Left ventricle myocardium superior (tissue), 1 donor: ENCODE measurements at regions of chr12 and their contacts with region 1.

Region 1: DNA sequence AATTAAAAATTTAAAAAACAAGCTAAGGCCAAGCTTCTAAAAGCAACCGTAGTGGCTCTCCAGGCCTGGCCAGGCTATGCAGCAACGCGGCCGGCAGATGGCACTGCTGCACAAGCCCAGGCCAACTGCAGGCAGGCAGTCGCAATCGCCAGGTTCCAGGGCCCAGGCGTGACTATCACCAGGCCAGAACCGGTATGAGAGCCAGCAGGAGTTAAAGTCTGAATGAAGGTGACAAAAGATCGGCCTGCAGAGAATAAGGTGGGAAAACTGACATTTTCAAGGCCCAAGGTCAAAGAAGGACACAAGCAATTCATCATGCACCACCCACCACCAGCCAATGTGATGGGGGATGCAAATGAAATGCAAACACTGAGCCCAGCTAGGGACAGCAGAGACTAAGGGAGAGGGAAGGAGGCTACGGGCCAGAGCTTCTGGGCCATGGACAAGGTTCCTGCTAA is 43.6 kb upstream of the ANO2 start:
- DNase-seq: peak; percentile 89
- ATAC-seq: peak; percentile 95

Region 2: DNA sequence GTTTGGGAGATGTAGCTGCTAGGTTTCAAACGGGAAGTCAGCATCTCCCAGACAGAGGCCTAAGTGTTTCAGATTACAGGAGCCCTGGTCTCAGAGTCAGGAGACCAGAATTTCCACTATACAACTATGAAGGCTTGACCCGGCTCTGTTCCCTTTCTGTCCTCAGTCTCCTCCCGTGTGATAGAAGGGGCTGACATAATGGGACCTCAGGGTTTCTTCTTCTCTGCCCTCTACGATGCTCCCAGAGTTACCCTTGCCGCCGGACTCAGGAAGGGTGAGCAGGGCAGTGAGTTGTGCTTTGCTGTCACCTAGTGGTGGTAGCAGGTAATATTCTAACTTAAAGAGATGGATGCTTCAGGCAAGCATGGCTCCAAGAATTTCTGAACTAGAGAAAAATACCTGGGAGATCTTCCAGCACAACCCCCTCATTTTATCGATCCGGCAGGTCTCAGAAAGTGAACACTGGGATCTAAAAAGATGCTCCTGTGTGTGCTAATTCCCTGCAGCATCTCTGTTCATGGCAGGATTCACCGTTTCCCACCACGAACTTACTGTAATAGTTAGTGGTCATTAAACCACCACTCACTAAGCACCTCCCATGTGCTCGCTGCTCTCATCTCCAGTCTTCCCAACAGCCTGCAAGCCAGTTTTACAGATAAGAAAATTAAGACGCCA is 51.3 kb after region 1 on chr12:
- intact Hi-C with region 1: loop called (anchors 2 kb)
- DNase-seq: no peak
- ATAC-seq: peak; percentile 80

Region 3: DNA sequence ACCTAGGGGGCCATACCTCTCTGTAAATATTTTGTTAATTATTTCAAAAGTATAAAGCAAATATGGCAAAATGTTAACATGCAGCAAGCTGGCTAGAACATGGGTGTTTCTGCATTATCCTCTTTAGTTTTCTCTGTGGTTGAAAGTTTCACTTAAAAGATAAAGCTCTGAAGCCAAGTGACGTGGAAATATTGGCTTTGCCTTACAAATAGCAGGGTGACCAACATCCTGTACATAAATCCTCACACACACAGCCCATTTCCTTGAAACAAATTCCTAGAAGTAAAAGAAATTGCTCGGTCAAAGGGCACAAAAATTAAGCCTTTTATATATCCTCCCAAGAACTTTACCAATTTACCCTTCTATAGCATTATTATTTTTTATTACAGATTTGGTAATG is 146.4 kb after region 1 on chr12:
- intact Hi-C with region 1: no loop called
- DNase-seq: no peak
- ATAC-seq: no peak